Activated B cell treated with CpG ODN at 0.5 μM for 24 hours (primary cell): ENCODE measurements at regions of chr17 and their contacts with region 1.

Region 1: DNA sequence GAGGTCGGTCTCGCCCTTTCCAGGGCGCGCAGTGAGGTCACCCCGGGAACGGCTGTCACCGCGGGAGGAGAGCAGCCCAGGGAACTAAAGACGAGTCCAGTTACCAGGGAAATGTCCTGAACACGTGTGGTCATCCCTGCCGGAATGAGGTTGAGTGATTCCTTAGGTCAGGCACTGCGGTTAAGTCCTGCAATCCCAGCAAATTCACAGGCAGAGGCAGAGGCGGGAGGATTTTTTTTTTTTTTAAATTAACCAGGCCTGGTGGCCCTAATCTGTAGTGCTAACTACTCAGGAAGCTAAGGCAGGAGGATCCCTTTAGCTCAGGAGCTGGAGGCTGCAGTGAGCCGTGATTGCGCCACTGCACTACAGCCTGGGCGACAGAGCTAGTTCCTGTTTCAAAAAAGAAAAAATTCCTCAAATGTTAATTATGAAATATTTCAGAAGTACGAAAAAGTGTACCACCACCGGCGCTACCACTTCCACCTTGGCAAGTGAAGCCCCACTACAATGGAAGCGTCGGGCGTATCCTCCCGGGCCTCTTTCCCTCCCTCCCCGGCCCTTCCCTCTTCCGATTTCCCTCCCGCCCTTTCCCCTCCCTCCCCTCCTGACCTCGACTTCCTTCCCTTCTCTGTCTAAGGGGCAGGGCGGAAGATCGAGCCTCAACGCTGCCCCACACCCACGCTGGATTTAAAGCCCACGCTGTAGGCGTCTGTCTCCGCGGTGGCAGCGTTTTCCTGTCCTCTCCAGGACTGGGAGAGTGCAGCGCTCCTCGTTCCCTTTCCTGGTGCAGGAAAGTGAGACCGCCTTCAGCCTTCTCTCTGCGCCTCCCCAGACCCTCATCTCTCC is 27.3 kb downstream of the SLFN11 start:
- DNase-seq: no peak
- ATAC-seq: peak; percentile 74
- H3K4me3 Mint-ChIP-seq: peak overlapping the region; percentile 86
- H3K27ac Mint-ChIP-seq: peak overlapping the region; percentile 79
- H3K4me1 Mint-ChIP-seq: peaks cover 40% of the 10 kb centered on the region
- H3K27me3 Mint-ChIP-seq: no peaks in the 10 kb centered on the region
- CTCF ChIP-seq: no peak

Region 2: GRCh38 chr17:35368081-35368830 is 22.1 kb after region 1 on chr17:
- CTCF ChIA-PET with region 1: no interaction called
- POLR2A ChIA-PET with region 1: interaction called, 9 read pairs
- intact Hi-C with region 1: loop called (anchors 1 kb)
- DNase-seq: no peak
- ATAC-seq: peak; percentile 100
- H3K4me3 Mint-ChIP-seq: peak overlapping the region; percentile 39
- H3K27ac Mint-ChIP-seq: peak overlapping the region; percentile 78
- H3K4me1 Mint-ChIP-seq: peaks cover 60% of the 10 kb centered on the region
- H3K27me3 Mint-ChIP-seq: no peaks in the 10 kb centered on the region
- CTCF ChIP-seq: no peak

Region 3: DNA sequence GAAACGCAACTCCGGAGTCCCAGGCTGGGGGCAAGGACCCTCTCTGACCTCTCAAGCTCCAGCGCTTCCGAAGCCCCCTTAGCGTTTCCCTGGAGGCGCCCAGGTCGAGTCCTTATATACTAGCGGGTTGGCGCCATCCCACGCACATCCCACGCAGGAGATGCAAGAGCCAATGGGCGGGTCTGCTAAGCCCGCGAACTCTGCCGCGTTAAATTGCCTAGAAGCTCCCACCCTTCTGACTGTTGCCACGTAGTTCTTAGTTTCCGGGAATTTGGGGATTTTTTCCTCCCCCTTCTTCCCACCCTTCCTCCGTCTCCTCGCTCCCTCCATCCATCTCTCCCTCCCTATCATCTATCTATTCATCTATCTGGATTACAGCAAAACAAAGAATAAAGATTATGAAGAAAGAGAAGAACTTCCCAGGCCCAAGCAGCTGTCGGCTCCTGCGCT is 27.4 kb after region 1 on chr17 and contains the start of gene SLFN11:
- CTCF ChIA-PET with region 1: no interaction called
- POLR2A ChIA-PET with region 1: interaction called, 9 read pairs
- intact Hi-C with region 1: loop called (anchors 1 kb)
- DNase-seq: peak; percentile 55
- ATAC-seq: peak; percentile 76
- H3K4me3 Mint-ChIP-seq: peak within 1 kb of the TSS; percentile 99
- H3K27ac Mint-ChIP-seq: peak within 1 kb of the TSS; percentile 98
- H3K4me1 Mint-ChIP-seq: peaks cover 50% of the 10 kb centered on the region
- H3K27me3 Mint-ChIP-seq: no peaks in the 10 kb centered on the region
- CTCF ChIP-seq: no peak
- total RNA-seq, gene SLFN11: 19.2 and 22.4 TPM in 2 replicates

Region 4: DNA sequence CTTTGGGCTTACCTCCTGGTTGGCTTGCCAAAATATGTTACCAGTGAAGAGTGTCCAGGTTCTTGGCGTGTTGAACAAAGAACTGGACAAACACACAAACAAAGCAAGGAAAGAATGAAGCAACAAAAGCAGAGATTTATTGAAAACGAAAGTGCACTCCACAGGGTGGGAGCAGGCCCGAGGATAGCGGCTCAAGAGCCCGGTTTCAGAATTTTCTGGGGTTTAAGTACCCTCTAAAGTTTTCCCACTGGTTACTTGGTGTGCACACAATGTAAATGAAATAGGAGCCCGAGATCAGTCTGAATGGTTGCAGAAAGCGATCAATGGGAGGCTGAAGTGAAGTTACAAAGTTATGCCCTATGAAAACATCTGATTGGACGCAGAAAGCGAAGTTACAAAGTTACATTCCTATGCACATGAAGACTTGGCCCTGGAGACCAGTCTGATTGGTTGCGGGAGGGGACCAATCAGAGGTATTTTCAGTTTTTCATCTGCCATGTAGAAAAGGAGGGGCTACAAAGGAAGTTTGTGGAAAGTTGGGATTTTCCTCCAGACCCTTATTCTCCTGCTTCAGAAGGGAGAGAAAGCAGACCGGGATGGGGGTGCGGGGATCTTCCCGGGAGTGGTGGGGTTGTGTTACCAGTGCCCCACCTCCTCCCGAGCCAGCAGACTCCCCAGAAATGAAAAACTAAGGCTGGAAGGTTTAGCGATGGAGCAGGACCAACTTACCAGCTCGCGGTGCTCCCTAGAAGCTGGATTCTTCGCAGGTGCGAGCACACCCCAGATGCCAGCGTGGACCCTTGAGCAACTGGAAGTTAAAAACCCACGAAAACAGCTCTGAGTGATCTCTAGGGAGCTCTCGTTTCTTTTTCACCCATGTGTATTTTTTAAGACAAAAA is 86.3 kb after region 1 on chr17 and contains the start of gene SLFN12:
- CTCF ChIA-PET with region 1: no interaction called
- POLR2A ChIA-PET with region 1: no interaction called
- intact Hi-C with region 1: loop called (anchors 1 kb)
- DNase-seq: peak; percentile 29
- ATAC-seq: peak; percentile 93
- H3K4me3 Mint-ChIP-seq: peak within 1 kb of the TSS; percentile 97
- H3K27ac Mint-ChIP-seq: peak within 1 kb of the TSS; percentile 92
- H3K4me1 Mint-ChIP-seq: peaks cover 31% of the 10 kb centered on the region
- H3K27me3 Mint-ChIP-seq: no peaks in the 10 kb centered on the region
- CTCF ChIP-seq: no peak
- total RNA-seq, gene SLFN12: 8.7 and 9.0 TPM in 2 replicates